Activated naive CD4-positive, alpha-beta T cell treated with anti-CD3 and anti-CD28 coated beads, Interleukin-2, amount 10 ng/mL, durations not matched to agents 7 days and 5 days (primary cell): ENCODE measurements at regions of chr22 and their contacts with region 1.

Region 1: DNA sequence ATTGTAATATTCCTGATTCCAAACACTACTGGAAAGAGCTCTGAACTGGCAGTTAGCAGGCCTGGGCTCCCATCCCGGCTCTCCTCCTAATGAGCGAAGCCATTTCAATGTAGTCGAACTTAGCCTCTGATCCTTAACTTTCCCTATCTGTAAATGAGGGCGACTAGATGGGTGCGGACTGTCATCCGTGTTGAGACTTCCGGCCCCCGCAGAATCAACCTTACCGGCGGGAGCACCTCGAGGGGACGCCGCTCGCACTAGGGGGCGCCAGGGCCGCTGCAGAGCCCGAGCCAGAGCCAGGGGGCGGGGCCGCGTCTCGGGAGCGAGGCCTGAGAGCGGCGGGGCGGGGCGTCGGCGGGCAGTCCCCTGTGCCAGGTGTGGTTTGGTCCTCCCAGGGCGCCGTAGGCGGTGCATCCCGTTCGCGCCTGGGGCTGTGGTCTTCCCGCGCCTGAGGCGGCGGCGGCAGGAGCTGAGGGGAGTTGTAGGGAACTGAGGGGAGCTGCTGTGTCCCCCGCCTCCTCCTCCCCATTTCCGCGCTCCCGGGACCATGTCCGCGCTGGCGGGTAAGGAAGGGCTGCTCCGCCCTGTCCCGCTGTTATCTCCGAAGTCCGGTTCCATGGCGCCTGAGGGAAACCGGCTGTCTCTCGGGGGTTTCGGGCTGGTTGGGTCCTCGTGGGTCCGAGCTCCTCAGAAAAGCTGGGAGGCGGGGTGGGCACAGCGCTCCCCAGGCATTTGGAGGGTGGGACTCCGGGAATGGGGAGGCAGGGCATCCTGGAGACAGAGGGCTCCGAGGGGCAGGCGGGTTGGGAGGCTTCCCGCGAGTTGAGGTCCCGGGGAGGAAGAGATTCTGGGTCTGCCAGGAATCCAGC is at the start of gene LIMK2:
- DNase-seq: peak; percentile 98
- H3K4me3 Mint-ChIP-seq: peak within 1 kb of the TSS; percentile 85
- H3K27ac Mint-ChIP-seq: peak within 1 kb of the TSS; percentile 90
- H3K4me1 Mint-ChIP-seq: peaks cover 53% of the 10 kb centered on the region
- H3K27me3 Mint-ChIP-seq: no peaks in the 10 kb centered on the region

Region 2: DNA sequence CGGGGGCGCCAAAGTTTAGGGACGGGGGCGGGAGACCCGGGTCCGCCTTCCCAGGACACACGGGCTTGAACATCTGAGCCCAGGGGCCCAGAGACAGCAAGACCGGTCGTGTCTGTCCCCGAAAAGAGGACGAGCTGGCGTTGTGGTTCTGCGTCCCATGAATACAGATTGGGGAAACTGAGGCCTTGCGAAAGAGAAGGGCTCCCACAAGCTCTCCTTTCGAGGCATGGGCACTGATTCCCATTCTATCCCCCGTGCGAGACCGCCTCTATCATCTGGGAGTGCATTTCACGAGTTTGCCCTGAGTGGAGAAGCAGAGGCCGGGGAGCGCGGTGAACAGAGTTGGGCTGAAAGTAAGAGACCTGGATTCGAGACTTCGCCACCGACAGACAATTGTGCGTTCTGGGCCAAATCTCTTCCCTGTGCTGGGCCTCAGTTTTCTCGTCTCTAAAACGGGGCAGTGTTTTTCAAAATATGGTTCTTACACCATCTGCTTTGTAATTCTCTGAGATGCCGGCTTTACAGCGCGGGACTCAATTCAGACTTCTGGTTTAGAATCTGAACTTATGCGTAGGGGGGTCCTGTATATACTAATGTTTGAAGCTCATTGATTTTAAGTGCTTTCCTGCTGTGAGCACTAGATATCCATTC is 51.6 kb before region 1 on chr22:
- CTCF ChIA-PET with region 1: interaction called, 10 read pairs
- DNase-seq: peak; percentile 40
- H3K4me3 Mint-ChIP-seq: peak overlapping the region; percentile 100
- H3K27ac Mint-ChIP-seq: peak overlapping the region; percentile 94
- H3K4me1 Mint-ChIP-seq: peaks cover 32% of the 10 kb centered on the region
- H3K27me3 Mint-ChIP-seq: peaks cover 18% of the 10 kb centered on the region

Region 3: DNA sequence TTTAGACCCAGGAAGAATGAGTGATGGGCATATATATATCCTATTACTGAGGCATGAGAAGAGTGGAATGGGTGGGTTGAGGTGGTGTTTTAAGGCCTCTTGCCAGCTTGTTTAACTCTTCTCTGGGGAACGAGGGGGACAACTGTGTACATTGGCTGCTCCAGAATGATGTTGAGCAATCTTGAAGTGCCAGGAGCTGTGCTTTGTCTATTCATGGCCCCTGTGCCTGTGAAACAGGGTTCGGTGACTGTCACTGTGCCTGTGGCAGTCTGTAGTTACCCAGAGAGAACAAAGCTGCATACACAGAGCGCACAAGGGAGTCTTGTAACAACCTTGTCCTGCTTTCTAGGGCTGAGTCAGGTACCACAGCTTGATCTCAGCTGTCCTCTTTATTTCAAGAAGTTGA is 11.7 kb after region 1 on chr22:
- CTCF ChIA-PET with region 1: interaction called, 34 read pairs
- DNase-seq: no peak
- H3K4me3 Mint-ChIP-seq: no peak overlapping the region
- H3K27ac Mint-ChIP-seq: no peak overlapping the region
- H3K4me1 Mint-ChIP-seq: peaks cover 32% of the 10 kb centered on the region
- H3K27me3 Mint-ChIP-seq: no peaks in the 10 kb centered on the region

Region 4: DNA sequence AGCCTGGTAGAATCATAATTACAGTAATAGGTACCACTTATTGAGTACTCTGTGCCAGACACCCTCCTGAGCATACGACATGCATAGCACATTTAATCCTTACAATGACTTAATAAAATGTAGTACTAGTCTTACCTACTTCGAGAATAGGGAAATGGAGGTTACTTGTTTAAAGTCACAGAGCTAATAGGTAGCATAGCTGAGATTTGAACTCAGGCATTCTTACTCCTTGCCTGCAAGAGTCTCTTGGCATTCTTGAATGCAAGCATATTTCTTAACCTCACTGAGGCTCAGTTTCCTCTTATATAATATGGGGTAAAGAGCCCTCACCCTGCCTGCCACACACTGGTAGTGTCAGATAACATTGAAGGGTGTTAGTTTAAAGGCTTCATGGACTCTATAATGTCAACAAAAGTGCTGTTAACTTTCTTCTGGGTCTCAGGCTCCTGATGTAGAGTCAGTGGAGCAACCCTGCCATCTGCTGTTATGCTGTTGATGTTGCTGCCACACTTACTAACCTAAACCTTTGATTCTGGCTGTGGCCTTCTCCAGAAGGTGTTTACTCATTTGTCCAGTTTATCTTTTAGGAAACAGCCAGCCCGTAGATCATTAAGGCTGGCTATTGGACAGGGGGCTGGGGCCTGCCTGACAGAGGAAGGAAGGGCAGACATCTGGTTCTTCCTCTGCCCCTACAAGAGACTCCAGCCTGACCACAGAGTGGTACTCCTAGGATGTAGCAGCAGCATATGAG is 18.9 kb after region 1 on chr22:
- CTCF ChIA-PET with region 1: interaction called, 34 read pairs
- DNase-seq: peak; percentile 73
- H3K4me3 Mint-ChIP-seq: no peak overlapping the region
- H3K27ac Mint-ChIP-seq: peak overlapping the region; percentile 91
- H3K4me1 Mint-ChIP-seq: peaks cover 41% of the 10 kb centered on the region
- H3K27me3 Mint-ChIP-seq: no peaks in the 10 kb centered on the region

Region 5: DNA sequence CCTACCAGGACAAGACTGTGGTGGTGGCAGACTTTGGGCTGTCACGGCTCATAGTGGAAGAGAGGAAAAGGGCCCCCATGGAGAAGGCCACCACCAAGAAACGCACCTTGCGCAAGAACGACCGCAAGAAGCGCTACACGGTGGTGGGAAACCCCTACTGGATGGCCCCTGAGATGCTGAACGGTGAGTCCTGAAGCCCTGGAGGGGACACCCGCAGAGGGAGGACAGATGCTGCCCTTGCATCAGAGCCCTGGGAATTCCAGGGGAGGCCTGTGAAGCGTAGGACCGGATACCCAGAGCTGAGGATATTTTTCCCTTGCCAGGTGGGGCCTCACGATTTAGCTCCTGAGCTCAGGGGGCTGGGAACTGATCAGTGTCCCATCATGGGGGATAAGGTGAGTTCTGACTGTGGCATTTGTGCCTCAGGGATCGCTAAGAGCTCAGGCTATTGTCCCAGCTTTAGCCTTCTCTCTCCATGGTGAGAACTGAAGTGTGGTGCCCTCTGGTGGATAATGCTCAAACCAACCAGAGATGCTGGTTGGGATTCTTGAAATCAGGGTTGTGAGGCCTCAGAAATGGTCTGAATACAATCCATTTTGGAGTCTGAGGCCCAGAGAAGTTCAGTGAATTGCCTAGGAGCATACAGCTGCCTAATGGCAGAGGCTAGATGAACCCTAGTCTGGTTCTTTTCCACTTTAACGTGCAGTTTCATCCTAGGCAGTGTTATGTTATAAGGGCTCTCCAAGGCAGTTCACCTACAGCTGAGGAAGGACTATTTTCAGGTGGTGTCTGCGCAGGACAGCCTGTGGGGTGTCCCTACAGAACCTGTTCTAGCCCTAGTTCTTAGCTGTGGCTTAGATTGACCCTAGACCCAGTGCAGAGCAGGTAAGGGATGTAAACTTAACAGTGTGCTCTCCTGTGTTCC is 60.7 kb after region 1 on chr22:
- CTCF ChIA-PET with region 1: interaction called, 47 read pairs
- DNase-seq: peak; percentile 71
- H3K4me3 Mint-ChIP-seq: no peak overlapping the region
- H3K27ac Mint-ChIP-seq: no peak overlapping the region
- H3K4me1 Mint-ChIP-seq: peaks cover 37% of the 10 kb centered on the region
- H3K27me3 Mint-ChIP-seq: no peaks in the 10 kb centered on the region

Region 6: GRCh38 chr22:31290494-31291471 is 78.7 kb after region 1 on chr22:
- CTCF ChIA-PET with region 1: interaction called, 11 read pairs
- DNase-seq: peak; percentile 97
- H3K4me3 Mint-ChIP-seq: peak overlapping the region; percentile 99
- H3K27ac Mint-ChIP-seq: peak overlapping the region; percentile 99
- H3K4me1 Mint-ChIP-seq: peaks cover 72% of the 10 kb centered on the region
- H3K27me3 Mint-ChIP-seq: peaks cover 4% of the 10 kb centered on the region

Region 7: DNA sequence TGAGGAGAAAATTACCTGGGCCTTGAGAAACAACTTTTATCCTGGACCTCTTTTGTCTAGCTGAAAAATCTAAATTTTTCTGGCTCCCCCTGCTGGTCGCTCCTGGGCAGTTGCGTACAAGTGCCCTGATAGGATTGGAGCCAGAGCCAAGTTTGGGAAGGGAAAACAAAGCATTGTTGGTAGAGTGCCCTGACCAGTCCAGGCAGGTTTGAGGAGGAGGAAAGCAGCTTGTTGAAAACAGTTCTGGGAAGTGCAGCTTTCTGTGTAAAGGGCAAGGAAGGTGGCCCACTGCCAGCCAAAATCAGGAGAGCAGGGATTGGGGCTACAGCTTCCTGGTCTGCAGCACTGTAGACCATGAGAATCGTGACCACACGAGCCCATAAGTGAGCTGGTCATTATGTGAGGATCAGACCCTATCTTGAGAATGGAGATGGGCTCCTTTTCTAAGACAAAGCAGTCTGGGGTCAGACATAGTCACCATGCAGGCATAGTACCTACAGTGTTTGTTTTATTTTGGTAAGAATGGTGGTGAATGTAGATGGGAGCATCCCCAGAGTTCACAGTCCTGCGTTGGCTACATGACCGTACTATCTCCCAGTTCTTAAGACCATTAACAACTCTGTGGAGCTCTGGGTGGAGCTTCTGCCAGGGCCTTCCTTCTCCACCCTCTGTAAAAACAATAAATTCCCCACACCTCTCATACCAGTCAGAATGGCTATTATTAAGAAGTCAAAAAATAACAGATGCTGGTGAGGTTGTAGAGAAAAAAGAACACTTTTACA is 101.5 kb after region 1 on chr22:
- CTCF ChIA-PET with region 1: interaction called, 29 read pairs
- DNase-seq: peak; percentile 81
- H3K4me3 Mint-ChIP-seq: no peak overlapping the region
- H3K27ac Mint-ChIP-seq: peak overlapping the region; percentile 7
- H3K4me1 Mint-ChIP-seq: peaks cover 27% of the 10 kb centered on the region
- H3K27me3 Mint-ChIP-seq: peaks cover 3% of the 10 kb centered on the region